Naive thymus-derived CD8-positive, alpha-beta T cell (primary cell): ENCODE measurements at regions of chr16 and their contacts with region 1.

Region 1: GRCh38 chr16:65480038-65480794 is 358.4 kb upstream of the CDH11 start:
- DNase-seq: no peak
- ATAC-seq: no peak
- H3K4me3 Mint-ChIP-seq: no peak overlapping the region
- H3K27ac Mint-ChIP-seq: peak overlapping the region in 1 of 10 donors; percentile 60
- H3K4me1 Mint-ChIP-seq: no peaks in the 10 kb centered on the region
- H3K27me3 Mint-ChIP-seq: no peaks in the 10 kb centered on the region

Region 2: GRCh38 chr16:65867276-65867960 is 387.2 kb after region 1 on chr16:
- POLR2A ChIA-PET with region 1: interaction called, 10 read pairs
- DNase-seq: no peak
- ATAC-seq: no peak
- H3K4me3 Mint-ChIP-seq: no peak overlapping the region
- H3K27ac Mint-ChIP-seq: peak overlapping the region in 1 of 10 donors; percentile 78
- H3K4me1 Mint-ChIP-seq: peaks cover 0 to 2% (median 0%) of the 10 kb centered on the region in 4 donors
- H3K27me3 Mint-ChIP-seq: peaks cover 0 to 10% (median 3%) of the 10 kb centered on the region in 5 donors